CD8-positive, alpha-beta T cell (primary cell): ENCODE measurements at regions of chr16 and their contacts with region 1.

Region 1: DNA sequence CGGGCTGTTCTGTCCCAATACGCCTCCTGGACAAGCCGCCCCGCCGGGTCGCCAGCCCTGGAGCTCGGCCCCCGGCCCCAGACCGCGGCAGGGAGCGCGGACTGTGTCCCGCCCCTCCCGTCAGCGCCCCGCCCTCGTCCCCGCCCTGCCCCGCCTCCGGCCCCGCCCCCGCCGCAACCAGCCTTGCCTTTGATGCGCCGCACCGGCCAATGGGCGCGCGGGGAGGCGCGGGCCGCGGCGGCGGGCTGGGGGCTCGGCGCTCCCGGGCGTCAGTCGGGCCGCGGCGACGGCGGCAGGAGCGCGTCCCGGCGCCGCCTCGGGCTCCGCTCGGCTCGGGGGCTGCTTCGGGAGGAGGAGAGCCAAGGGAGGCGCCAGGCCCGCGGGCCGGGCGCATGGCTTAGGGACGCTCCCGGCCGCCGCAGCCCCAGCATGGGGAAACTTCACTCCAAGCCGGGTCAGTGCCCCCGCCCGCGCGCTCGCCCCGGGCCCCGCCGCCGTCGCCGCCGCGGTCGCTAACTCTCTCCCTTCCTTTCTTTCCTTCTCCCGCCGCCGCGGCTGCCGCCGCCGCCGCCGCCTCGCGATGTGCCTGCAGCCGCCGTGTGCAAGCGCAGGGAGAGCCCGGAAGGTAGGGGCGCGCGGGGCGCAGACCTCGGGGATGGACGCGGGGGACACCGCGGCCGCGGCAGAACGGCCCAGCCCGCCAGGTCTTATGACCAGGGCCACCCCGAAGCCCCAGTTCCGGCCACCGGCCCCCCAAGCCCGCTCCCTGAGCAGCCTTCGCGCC is at the start of gene NKD1:
- DNase-seq: peak; percentile 44 to 85 (median 73)
- ATAC-seq: peak; percentile 68
- H3K4me3 ChIP-seq: peak within 1 kb of the TSS; percentile 71 to 76
- H3K4me3 Mint-ChIP-seq: peak within 1 kb of the TSS; percentile 88
- H3K27ac ChIP-seq: peak within 1 kb of the TSS; percentile 39 to 60
- H3K27ac Mint-ChIP-seq: peak within 1 kb of the TSS; percentile 92
- H3K4me1 ChIP-seq: peaks cover 32% of the 10 kb centered on the region
- H3K4me1 Mint-ChIP-seq: peaks cover 31% of the 10 kb centered on the region
- H3K27me3 ChIP-seq: no peaks in the 10 kb centered on the region
- H3K27me3 Mint-ChIP-seq: no peaks in the 10 kb centered on the region
- CTCF ChIP-seq: no peak
- total RNA-seq, gene NKD1: 6.0 to 7.5 TPM

Region 2: DNA sequence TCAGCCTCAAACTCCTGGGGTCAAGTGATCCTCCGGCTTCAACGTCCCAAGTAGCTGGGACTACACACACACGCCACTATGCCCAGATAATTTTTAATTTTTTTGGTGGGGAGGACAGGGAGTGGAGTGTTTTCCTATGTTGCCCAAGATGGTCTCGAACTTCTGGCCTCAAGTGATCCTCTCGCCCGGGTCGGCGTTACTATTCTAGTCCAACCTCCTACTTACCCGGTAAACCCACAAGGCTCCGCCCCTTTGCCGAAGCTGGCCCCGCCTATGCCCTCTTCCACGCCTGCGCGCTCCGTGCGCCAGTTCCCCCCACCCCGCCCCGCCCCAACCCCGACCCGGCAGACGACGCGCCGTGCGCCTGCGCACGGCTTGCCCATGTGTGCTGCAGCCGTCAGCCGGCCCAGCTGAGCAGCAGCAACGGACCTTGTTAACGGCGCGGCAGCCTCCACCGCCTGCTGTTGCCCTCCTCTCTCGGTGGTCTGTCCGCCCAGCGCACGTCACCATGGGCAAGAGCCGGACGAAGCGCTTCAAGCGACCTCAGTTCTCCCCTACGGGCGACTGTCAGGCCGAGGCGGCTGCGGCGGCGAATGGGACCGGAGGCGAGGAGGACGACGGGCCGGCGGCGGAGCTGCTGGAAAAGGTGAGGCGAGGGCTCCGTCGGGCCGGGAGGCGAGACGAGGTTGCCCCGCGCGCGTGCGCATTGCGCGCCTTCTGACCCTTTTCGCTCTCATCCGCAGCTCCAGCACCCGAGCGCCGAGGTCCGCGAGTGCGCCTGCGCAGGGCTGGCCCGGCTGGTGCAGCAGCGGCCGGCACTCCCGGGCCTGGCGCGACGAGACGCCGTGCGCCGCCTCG is 482.5 kb before region 1 on chr16 and contains the start of gene HEATR3:
- CTCF ChIA-PET with region 1: no interaction called
- POLR2A ChIA-PET with region 1: no interaction called
- intact Hi-C with region 1: loop called in 1 of 2 experiments (anchors 2 kb)
- DNase-seq: peak; percentile 88 to 97 (median 93)
- ATAC-seq: peak; percentile 86
- H3K4me3 ChIP-seq: peak within 1 kb of the TSS; percentile 78 to 92
- H3K4me3 Mint-ChIP-seq: peak within 1 kb of the TSS; percentile 93
- H3K27ac ChIP-seq: peak within 1 kb of the TSS; percentile 73 to 79
- H3K27ac Mint-ChIP-seq: peak within 1 kb of the TSS; percentile 92
- H3K4me1 ChIP-seq: peaks cover 17% of the 10 kb centered on the region
- H3K4me1 Mint-ChIP-seq: peaks cover 42% of the 10 kb centered on the region
- H3K27me3 ChIP-seq: no peaks in the 10 kb centered on the region
- H3K27me3 Mint-ChIP-seq: no peaks in the 10 kb centered on the region
- CTCF ChIP-seq: no peak
- total RNA-seq, gene HEATR3: 9.3 to 11.4 TPM

Region 3: DNA sequence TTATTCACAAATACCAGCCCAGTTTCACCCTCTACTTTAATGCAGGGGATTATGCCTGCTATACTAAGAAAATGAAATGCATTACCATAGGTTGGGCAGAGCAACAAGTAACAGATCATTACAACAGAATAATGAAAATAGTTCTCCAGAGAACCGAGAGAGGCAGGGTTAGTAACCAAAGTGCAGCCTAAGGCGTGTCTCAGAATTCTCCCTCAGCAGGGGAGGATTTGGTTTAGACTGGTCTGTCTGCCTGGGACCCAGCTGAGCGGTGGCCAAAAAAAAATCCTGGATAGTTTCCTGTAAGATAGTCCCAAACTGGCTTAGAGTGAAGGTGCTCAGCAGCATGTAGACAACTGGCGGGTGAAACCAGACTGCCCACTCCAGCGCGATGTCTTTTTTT is 312.7 kb before region 1 on chr16:
- CTCF ChIA-PET with region 1: no interaction called
- POLR2A ChIA-PET with region 1: no interaction called
- intact Hi-C with region 1: no loop called
- DNase-seq: no peak
- ATAC-seq: no peak
- H3K4me3 ChIP-seq: no peak overlapping the region
- H3K4me3 Mint-ChIP-seq: no peak overlapping the region
- H3K27ac ChIP-seq: no peak overlapping the region
- H3K27ac Mint-ChIP-seq: no peak overlapping the region
- H3K4me1 ChIP-seq: no peaks in the 10 kb centered on the region
- H3K4me1 Mint-ChIP-seq: no peaks in the 10 kb centered on the region
- H3K27me3 ChIP-seq: no peaks in the 10 kb centered on the region
- H3K27me3 Mint-ChIP-seq: no peaks in the 10 kb centered on the region
- CTCF ChIP-seq: no peak

Region 4: GRCh38 chr16:50326949-50327402 is 221.3 kb before region 1 on chr16:
- CTCF ChIA-PET with region 1: no interaction called
- POLR2A ChIA-PET with region 1: no interaction called
- intact Hi-C with region 1: loop called (anchors 5 kb)
- DNase-seq: peak; percentile 32 to 92 (median 76)
- ATAC-seq: peak; percentile 91
- H3K4me3 ChIP-seq: no peak overlapping the region
- H3K4me3 Mint-ChIP-seq: no peak overlapping the region
- H3K27ac ChIP-seq: peak overlapping the region in 1 of 2 experiments; percentile 60
- H3K27ac Mint-ChIP-seq: peak overlapping the region; percentile 88
- H3K4me1 ChIP-seq: peaks cover 24% of the 10 kb centered on the region
- H3K4me1 Mint-ChIP-seq: peaks cover 74% of the 10 kb centered on the region
- H3K27me3 ChIP-seq: no peaks in the 10 kb centered on the region
- H3K27me3 Mint-ChIP-seq: no peaks in the 10 kb centered on the region
- CTCF ChIP-seq: peak; percentile 76

Region 5: GRCh38 chr16:50520451-50521245 is 27.7 kb before region 1 on chr16:
- CTCF ChIA-PET with region 1: no interaction called
- POLR2A ChIA-PET with region 1: no interaction called
- intact Hi-C with region 1: no loop called
- DNase-seq: peak in 1 of 9 experiments; percentile 7
- ATAC-seq: no peak
- H3K4me3 ChIP-seq: no peak overlapping the region
- H3K4me3 Mint-ChIP-seq: no peak overlapping the region
- H3K27ac ChIP-seq: no peak overlapping the region
- H3K27ac Mint-ChIP-seq: no peak overlapping the region
- H3K4me1 ChIP-seq: no peaks in the 10 kb centered on the region
- H3K4me1 Mint-ChIP-seq: no peaks in the 10 kb centered on the region
- H3K27me3 ChIP-seq: peaks cover 0 to 3% of the 10 kb centered on the region in 2 experiments
- H3K27me3 Mint-ChIP-seq: peaks cover 5% of the 10 kb centered on the region
- CTCF ChIP-seq: no peak

Region 6: GRCh38 chr16:50593410-50594150 is 45.3 kb after region 1 on chr16:
- CTCF ChIA-PET with region 1: no interaction called
- POLR2A ChIA-PET with region 1: no interaction called
- intact Hi-C with region 1: loop called in 1 of 2 experiments (anchors 1 kb)
- DNase-seq: no peak
- ATAC-seq: no peak
- H3K4me3 ChIP-seq: no peak overlapping the region
- H3K4me3 Mint-ChIP-seq: no peak overlapping the region
- H3K27ac ChIP-seq: no peak overlapping the region
- H3K27ac Mint-ChIP-seq: no peak overlapping the region
- H3K4me1 ChIP-seq: peaks cover 18% of the 10 kb centered on the region
- H3K4me1 Mint-ChIP-seq: peaks cover 23% of the 10 kb centered on the region
- H3K27me3 ChIP-seq: no peaks in the 10 kb centered on the region
- H3K27me3 Mint-ChIP-seq: no peaks in the 10 kb centered on the region
- CTCF ChIP-seq: no peak

Region 7: GRCh38 chr16:50681021-50681885 is 132.9 kb after region 1 on chr16 and contains the start of gene SNX20:
- CTCF ChIA-PET with region 1: no interaction called
- POLR2A ChIA-PET with region 1: no interaction called
- intact Hi-C with region 1: loop called in 1 of 2 experiments (anchors 5 kb)
- DNase-seq: peak; percentile 43 to 87 (median 72)
- ATAC-seq: peak; percentile 92
- H3K4me3 ChIP-seq: peak within 1 kb of the TSS; percentile 65 to 88
- H3K4me3 Mint-ChIP-seq: peak within 1 kb of the TSS; percentile 92
- H3K27ac ChIP-seq: peak within 1 kb of the TSS; percentile 51 to 86
- H3K27ac Mint-ChIP-seq: peak within 1 kb of the TSS; percentile 97
- H3K4me1 ChIP-seq: peaks cover 74% of the 10 kb centered on the region
- H3K4me1 Mint-ChIP-seq: peaks cover 85% of the 10 kb centered on the region
- H3K27me3 ChIP-seq: no peaks in the 10 kb centered on the region
- H3K27me3 Mint-ChIP-seq: no peaks in the 10 kb centered on the region
- CTCF ChIP-seq: no peak
- total RNA-seq, gene SNX20: 18.6 to 20.1 TPM

Region 8: GRCh38 chr16:50806099-50807062 is 258.1 kb after region 1 on chr16:
- CTCF ChIA-PET with region 1: no interaction called
- POLR2A ChIA-PET with region 1: no interaction called
- intact Hi-C with region 1: loop called (anchors 5 kb)
- DNase-seq: peak; percentile 69 to 93 (median 86)
- ATAC-seq: peak; percentile 96
- H3K4me3 ChIP-seq: peak overlapping the region; percentile 36 to 38
- H3K4me3 Mint-ChIP-seq: peak overlapping the region; percentile 81
- H3K27ac ChIP-seq: no peak overlapping the region
- H3K27ac Mint-ChIP-seq: peak overlapping the region; percentile 88
- H3K4me1 ChIP-seq: peaks cover 3% of the 10 kb centered on the region
- H3K4me1 Mint-ChIP-seq: peaks cover 11% of the 10 kb centered on the region
- H3K27me3 ChIP-seq: no peaks in the 10 kb centered on the region
- H3K27me3 Mint-ChIP-seq: no peaks in the 10 kb centered on the region
- CTCF ChIP-seq: peak; percentile 96